ENCODE measurements at regions of chr9 and their contacts with region 1.

Region 1: DNA sequence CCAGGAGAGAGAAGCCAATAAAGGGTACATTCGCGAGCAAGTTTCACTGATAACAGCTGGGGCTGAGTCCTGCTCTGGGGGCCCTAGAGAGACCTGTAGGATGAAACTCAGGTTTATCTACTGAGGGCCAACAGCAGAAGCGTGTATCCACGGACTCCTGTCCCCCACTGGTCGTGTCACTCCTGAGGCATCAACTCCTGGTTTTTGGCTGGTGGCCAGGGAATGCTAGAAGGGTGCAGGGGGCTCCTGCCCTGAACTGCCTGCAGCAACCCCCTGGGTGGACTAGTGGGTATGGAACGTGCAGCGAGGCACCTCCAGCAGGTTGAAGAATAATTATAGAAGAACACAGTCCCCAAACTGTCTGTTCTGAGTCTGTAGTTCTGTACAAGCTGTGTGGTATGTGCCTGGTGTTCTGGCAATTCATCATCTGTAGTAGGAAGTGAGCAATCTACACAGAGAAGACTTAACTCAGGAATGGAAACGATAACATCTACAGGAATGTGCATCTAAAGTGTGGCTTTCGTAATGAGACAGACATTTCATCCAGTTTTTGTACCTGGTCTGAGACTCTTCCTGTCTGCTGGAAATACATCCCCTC is 64.5 kb upstream of the GNA14 start:
- DNase-seq: no peak
- H3K4me3 Mint-ChIP-seq: no peak overlapping the region
- H3K27ac Mint-ChIP-seq: no peak overlapping the region
- H3K4me1 Mint-ChIP-seq: no peaks in the 10 kb centered on the region
- H3K27me3 Mint-ChIP-seq: peaks cover 1% of the 10 kb centered on the region

Region 2: DNA sequence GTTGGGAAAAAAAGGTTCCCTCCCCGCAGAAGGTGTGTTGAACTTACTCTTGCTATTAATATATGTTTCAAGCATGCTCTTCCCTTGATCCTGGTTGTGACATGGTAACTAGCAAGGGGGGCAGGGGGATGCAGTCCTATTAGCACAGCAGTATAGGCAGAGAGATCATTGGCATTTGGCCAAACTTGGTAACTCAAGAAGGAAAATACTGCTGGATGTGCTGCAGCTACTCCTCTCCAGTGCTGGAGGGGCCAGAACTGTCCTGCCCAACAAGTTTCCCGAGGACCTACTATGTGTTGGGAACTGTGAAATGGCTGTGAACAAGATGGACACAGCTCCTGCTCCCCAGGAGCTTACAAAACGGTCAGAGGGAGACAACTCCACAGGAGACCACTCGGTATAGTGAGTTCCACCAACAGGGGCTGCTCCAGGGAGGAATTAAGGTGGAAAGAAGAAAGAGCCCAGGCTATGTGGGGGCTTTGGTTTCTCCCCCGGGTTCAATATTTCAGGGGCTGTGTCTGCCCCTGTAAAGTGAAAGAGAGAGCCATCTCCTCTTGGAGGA is 143.4 kb before region 1 on chr9:
- CTCF ChIA-PET with region 1: no interaction called
- POLR2A ChIA-PET with region 1: no interaction called
- intact Hi-C with region 1: no loop called
- DNase-seq: no peak
- H3K4me3 Mint-ChIP-seq: no peak overlapping the region
- H3K27ac Mint-ChIP-seq: no peak overlapping the region
- H3K4me1 Mint-ChIP-seq: no peaks in the 10 kb centered on the region
- H3K27me3 Mint-ChIP-seq: peaks cover 6% of the 10 kb centered on the region

Region 3: DNA sequence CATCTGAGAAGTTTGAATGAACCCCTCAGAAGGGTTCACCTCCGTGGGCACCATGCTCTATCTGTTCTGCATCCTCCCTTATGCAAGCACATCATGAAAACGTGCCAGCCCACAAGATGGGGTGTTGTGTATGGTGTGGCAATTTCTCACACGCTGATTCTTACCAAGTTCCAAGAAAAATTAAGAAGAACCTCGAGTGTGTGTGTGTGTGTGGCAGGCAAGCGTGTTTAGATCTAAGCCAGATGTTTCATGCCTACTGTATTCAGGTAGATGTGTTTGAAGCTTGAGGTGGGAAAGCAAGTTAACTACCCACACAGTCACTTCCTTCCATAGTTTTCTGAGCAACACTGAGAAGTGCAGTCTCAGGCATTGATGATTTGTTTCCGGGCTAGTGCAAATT is 13.2 kb after region 1 on chr9:
- CTCF ChIA-PET with region 1: no interaction called
- POLR2A ChIA-PET with region 1: no interaction called
- intact Hi-C with region 1: loop called (anchors 2 kb)
- DNase-seq: peak; percentile 62
- H3K4me3 Mint-ChIP-seq: no peak overlapping the region
- H3K27ac Mint-ChIP-seq: peak overlapping the region; percentile 77
- H3K4me1 Mint-ChIP-seq: peaks cover 45% of the 10 kb centered on the region
- H3K27me3 Mint-ChIP-seq: no peaks in the 10 kb centered on the region